ENCODE measurements at regions of chr6 and their contacts with region 1.

Region 1: DNA sequence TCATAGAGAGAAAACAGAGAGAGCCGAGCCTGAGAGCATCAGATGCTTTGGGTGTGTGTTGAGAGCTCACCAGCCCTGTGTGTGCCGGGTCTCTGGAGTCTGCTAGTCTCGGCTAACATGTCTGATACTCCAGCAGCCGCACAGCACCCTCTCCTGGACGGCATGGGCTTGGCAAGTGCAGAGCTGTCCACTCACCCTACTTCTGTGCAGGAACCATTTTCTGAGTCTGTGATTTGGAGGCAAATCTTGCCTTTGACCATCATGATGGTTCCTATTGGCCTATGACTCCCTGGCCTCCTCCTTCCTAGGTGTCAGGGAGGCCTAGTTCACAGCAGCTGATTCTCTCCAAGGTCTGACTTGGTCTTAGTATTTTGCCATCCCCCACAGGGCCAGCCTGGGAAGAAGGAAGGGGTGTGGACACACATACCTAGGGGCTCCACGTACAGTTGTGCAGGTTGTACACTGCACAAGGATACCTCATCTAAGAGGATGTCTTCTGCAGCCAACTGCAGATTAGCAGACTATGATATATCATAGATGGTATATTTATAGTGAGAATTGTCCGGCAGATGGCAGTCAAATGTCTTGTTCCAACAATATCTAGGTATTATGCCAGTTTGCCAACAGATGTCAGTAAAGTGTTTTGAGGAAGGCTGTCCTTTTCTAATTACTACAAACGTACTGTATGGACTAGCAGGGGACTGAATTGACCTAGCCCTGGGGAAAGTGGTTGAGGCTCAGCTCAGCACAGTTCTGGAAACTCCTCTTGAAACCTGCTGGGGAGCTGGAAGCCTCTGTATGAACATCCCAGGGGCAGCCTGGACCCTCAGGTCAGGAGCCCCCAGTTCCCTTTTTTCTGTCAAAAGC is 13.0 kb downstream of the FGD2 start:
- DNase-seq: peak; percentile 96
- H3K4me3 ChIP-seq: no peak overlapping the region
- H3K27ac ChIP-seq: peak overlapping the region; percentile 55 to 63 (median 60)
- H3K4me1 ChIP-seq: peaks cover 0 to 18% (median 15%) of the 10 kb centered on the region in 4 donors
- H3K27me3 ChIP-seq: no peaks in the 10 kb centered on the region
- CTCF ChIP-seq: peak; percentile 79 to 90 (median 88)
- EP300 ChIP-seq: no peak
- POLR2A ChIP-seq: no peak

Region 2: DNA sequence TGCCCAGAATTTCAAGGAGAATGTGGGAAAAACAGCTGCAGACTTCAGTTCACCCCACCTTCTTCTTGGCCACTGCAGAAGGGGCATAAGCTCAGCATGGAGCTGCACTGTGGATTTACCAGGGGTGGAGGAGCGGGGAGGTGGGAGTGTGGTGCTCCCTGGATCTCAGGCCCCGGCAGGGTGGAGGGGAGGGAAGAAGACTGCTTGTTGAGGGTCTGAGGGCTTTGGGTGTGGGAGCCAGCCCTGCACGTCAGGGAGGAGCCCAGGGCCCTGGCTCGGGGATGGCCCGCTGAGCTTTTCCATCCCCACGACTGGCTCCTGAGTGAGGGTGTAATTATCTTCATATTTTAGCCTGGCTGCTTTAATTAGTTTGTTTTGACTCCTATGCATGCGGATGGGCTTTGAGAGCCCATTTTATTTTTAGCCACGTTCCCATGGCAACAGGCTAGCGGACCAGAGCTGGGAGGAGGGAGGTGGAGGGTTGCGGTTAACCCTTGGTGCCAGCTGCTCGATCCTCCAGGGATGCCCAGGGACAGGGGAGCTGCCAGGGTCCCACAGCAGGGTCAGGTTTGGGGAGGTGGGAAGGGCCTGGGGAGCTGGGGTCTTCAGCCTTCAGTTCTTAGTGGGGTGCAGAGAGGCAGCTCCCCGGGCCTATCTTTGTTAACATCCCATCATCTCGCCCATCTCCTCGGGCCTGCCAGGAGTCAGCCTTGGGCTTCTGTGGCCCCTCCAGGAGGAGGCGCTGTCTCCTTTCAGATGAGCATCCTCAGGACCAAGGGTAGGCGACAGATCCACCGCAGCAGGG is 252.6 kb before region 1 on chr6:
- intact Hi-C with region 1: loop called (anchors 1 kb)
- DNase-seq: peak; percentile 89
- H3K4me3 ChIP-seq: no peak overlapping the region
- H3K27ac ChIP-seq: no peak overlapping the region
- H3K4me1 ChIP-seq: peaks cover 0 to 28% (median 20%) of the 10 kb centered on the region in 4 donors
- H3K27me3 ChIP-seq: no peaks in the 10 kb centered on the region
- CTCF ChIP-seq: peak; percentile 70 to 83 (median 80)
- EP300 ChIP-seq: no peak
- POLR2A ChIP-seq: no peak

Region 3: DNA sequence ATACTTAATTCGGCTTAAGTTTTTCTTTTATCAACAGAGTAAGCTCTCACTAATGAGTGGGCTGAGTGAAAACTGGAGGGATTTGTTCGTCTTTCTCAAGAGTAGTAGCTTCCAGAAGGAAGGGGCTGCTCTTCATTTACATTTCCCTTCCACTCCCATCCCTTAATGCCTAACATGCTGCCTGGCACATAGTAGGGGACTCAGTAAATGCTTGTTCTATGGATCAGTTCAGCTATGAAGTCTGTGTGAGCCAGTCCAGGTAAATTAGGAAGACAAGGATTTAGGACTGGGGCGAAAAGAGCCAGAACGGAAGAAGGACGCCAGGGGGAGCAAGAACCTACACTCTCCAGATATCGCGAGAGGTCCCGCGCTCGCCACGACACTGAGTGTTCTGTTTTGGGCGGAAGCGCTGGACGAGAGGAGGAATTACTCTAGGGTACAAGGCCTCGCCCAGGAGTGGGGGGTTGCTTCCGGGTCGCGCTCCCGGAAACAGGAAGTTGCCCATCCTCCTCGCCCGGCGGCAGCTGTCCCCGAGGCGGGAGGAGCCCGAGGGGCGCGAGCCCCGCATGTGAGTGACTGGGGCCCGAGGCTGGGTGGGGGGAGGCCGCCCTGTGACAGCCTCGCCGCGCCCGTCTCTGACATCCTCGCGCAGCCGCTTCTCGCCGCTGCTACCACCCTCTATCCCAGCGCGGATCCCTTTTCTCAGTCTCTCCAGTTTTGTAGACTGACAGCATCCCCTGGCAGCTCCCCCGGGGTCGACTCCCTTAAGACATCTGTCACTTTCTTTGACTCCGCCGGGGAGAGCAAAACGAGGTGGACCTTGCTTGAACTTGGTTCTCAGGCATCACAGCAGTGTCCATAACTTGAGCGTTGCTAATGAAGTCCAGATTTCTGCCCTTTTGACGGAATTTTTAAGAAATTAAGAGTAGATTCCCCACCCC is 132.7 kb before region 1 on chr6 and contains the start of gene C6orf89:
- intact Hi-C with region 1: loop called (anchors 1 kb)
- DNase-seq: peak; percentile 99
- H3K4me3 ChIP-seq: peak within 1 kb of the TSS; percentile 69 to 84 (median 78)
- H3K27ac ChIP-seq: peak within 1 kb of the TSS; percentile 85 to 89 (median 87)
- H3K4me1 ChIP-seq: peaks cover 0 to 37% (median 24%) of the 10 kb centered on the region in 4 donors
- H3K27me3 ChIP-seq: no peaks in the 10 kb centered on the region
- CTCF ChIP-seq: peak; percentile 84 to 98 (median 93)
- EP300 ChIP-seq: peak in 1 of 4 donors; percentile 56
- POLR2A ChIP-seq: peak; percentile 66
- total RNA-seq, gene C6orf89: 37.3 to 51.4 (median 44.3) TPM

Region 4: GRCh38 chr6:36897609-36898008 is 120.8 kb before region 1 on chr6:
- intact Hi-C with region 1: no loop called
- DNase-seq: no peak
- H3K4me3 ChIP-seq: no peak overlapping the region
- H3K27ac ChIP-seq: no peak overlapping the region
- H3K4me1 ChIP-seq: no peaks in the 10 kb centered on the region
- H3K27me3 ChIP-seq: no peaks in the 10 kb centered on the region
- CTCF ChIP-seq: peak in 2 of 4 experiments; percentile 5 to 18
- EP300 ChIP-seq: no peak
- POLR2A ChIP-seq: no peak

Region 5: DNA sequence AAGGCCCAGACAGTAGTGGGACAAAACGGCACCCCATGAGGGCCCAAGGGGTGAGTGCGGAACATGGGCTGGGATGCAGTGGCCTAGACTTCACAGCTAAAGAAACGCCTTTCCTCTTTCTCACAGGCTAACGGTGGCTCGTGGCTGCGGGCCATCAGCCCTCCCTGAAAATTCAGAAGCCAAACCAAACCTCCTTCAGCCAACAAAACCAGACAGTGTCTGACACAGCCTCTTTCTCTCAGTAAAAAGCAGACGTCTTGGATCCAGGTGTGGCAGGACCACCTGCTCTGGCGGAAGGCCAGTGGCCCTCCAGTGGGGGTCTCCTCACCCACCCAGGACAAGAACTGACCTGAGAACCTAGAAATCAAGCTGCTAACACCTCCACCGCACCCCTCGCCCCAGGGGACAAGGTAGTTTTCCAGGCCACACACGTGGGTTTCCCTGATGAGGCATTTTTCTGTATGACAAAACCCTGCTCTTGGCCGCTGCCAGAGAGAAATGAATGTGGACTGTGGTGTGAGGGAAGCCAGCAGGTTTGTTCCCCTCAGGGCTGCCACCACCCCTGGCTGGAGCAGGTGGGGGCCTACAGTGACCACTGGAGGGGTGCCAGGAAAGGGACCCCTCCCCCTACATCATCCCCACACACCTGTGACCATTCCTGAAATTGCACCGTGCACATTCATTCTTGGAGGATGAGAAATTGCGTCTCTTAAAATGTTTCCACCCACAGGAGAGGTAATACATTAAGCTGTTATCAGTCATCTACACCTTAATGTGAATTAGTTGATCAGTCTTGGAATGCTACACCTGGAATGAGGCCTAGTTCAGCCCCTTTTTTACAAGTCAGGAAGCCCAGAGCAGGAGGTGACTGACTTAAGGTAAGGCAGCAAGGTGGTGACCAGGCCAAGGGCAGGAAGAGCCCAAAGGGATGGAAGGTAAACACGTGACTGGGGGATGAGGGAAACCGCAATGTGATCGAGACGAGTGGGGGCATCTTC is 74.8 kb after region 1 on chr6:
- intact Hi-C with region 1: no loop called
- DNase-seq: no peak
- H3K4me3 ChIP-seq: no peak overlapping the region
- H3K27ac ChIP-seq: peak overlapping the region in 1 of 4 donors; percentile 25
- H3K4me1 ChIP-seq: no peaks in the 10 kb centered on the region
- H3K27me3 ChIP-seq: no peaks in the 10 kb centered on the region
- CTCF ChIP-seq: no peak
- EP300 ChIP-seq: no peak
- POLR2A ChIP-seq: no peak

Region 6: DNA sequence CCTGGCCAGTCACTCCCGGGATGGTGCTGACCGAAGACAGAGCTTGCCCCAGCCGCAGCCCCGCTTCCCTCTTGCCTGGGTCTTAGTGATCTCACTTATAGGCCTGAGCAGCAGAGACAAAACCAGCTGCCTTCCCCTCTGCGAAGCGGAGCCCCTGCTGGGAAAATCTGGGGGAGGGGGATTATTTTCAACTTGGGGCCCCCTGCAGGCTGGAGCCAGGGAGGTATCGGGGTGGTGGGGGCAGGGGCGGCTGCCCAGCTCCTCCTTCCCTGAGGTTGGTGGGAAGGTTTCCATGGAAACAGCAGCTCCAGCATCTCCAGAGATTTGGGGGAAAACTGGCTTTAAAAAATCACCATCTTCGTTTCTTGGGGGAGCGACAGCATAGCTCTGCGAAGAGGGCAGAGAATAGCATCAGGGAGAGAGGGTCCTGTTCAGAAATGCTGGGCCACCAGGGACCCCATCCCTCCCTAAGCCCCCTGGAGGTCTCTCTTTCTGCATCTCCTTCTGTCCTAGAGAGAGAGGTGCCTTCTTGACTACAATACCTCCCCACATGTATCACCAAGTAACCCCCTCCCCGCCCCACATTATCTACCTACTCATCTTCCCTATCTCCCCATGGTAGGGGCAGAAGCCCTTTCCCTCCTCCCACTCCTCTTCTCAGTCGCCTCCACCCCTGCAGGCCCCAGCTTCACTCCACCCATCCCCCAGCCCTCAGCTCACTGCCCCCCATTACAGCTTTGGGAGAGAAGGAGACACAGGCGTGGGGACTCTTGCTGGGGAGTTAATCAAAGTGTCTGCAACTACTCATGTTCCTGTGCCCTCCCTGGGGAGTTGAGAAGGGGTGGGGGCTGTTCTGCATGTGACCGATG is 569.7 kb after region 1 on chr6:
- intact Hi-C with region 1: no loop called
- DNase-seq: no peak
- H3K4me3 ChIP-seq: no peak overlapping the region
- H3K27ac ChIP-seq: no peak overlapping the region
- H3K4me1 ChIP-seq: no peaks in the 10 kb centered on the region
- H3K27me3 ChIP-seq: peaks cover 0 to 13% (median 0%) of the 10 kb centered on the region in 3 donors
- CTCF ChIP-seq: no peak
- EP300 ChIP-seq: no peak
- POLR2A ChIP-seq: no peak

Measured in sigmoid colon (tissue), 7 donors.